Activated naive CD4-positive, alpha-beta T cell treated with anti-CD3 and anti-CD28 coated beads, Interleukin-2, amount 10 ng/mL, durations not matched to agents 7 days and 5 days (primary cell): ENCODE measurements at regions of chr6 and their contacts with region 1.

Region 1: DNA sequence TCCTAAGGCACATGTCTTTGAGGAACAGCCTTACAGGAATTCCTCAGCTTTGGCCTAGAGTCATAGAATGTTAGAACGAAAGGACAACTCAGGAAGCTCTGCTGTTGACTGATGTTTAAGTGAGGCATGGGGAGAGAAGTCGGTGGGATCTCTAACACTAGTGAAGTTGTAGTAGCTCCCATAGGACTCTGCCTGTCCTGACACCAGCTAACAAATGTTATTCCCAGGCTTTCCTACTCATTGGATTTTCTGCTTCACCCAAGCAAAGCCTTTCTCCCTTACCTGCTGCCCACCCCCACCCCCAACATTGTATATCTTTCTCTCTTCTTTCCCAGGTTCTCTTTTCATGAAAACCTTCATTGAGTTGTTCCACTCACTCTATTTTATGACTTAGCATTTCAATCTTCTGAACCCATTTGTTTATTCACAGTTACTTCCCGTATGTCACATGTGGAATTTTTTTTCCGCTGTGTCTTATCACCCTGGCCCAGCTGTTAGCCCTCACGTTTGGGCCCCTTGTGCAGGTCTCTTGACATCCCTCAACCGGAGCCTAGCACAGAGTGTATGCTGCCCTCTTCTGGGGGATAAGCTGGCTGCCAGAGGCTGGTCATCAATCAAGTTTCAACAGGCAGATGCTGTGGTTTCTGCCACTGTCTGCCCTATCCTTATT is 39.2 kb upstream of the RNF8 start:
- DNase-seq: peak; percentile 75
- H3K4me3 Mint-ChIP-seq: no peak overlapping the region
- H3K27ac Mint-ChIP-seq: no peak overlapping the region
- H3K4me1 Mint-ChIP-seq: peaks cover 17% of the 10 kb centered on the region
- H3K27me3 Mint-ChIP-seq: no peaks in the 10 kb centered on the region

Region 2: GRCh38 chr6:37127961-37128862 is 186.4 kb before region 1 on chr6:
- CTCF ChIA-PET with region 1: no interaction called
- DNase-seq: no peak
- H3K4me3 Mint-ChIP-seq: no peak overlapping the region
- H3K27ac Mint-ChIP-seq: no peak overlapping the region
- H3K4me1 Mint-ChIP-seq: peaks cover 2% of the 10 kb centered on the region
- H3K27me3 Mint-ChIP-seq: peaks cover 30% of the 10 kb centered on the region

Region 3: GRCh38 chr6:37207903-37208456 is 106.6 kb before region 1 on chr6:
- CTCF ChIA-PET with region 1: interaction called, 34 read pairs
- DNase-seq: peak; percentile 95
- H3K4me3 Mint-ChIP-seq: peak overlapping the region; percentile 46
- H3K27ac Mint-ChIP-seq: peak overlapping the region; percentile 89
- H3K4me1 Mint-ChIP-seq: peaks cover 73% of the 10 kb centered on the region
- H3K27me3 Mint-ChIP-seq: no peaks in the 10 kb centered on the region

Region 4: GRCh38 chr6:37222125-37222967 is 92.3 kb before region 1 on chr6:
- CTCF ChIA-PET with region 1: interaction called, 10 read pairs
- DNase-seq: peak; percentile 88
- H3K4me3 Mint-ChIP-seq: peak overlapping the region; percentile 76
- H3K27ac Mint-ChIP-seq: peak overlapping the region; percentile 77
- H3K4me1 Mint-ChIP-seq: peaks cover 31% of the 10 kb centered on the region
- H3K27me3 Mint-ChIP-seq: no peaks in the 10 kb centered on the region

Region 5: GRCh38 chr6:37303932-37304363 is 10.7 kb before region 1 on chr6:
- CTCF ChIA-PET with region 1: interaction called, 20 read pairs
- DNase-seq: peak; percentile 48
- H3K4me3 Mint-ChIP-seq: no peak overlapping the region
- H3K27ac Mint-ChIP-seq: peak overlapping the region; percentile 5
- H3K4me1 Mint-ChIP-seq: peaks cover 15% of the 10 kb centered on the region
- H3K27me3 Mint-ChIP-seq: no peaks in the 10 kb centered on the region